PC-3 (cell line): ENCODE measurements at regions of chr11 and their contacts with region 1.

Region 1: DNA sequence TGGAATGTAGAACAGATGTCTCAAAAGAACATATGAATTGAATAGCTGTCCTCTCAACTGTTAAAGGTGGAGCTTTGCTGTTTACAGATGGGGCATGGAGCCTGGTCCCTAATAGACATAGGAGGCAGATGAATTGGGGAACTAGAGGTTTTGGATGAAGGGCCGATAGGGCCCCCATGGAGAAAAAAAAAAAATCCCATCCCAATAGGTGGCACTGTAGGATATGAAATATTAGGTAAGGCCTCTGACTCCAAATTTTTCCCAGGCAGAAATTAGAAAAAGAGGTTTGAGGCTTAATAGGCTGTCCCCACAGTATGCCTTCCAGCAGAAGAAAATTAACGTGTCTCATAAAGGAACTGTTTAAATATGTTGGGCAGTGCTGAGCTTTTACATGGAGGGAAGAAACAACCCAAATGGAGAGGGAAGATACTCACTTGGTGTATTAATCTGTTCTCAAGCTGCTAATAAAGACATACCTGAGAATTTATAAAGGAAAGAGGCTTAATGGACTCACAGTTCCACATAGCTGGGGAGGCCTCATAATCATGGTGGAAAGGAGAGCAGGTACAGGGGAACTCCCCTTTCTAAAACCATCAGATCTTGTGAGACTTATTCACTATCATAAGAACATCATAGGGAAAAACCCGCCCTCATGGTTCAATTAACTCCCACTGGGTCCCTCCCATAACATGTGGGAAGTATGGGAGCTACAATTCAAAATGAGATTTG is 30.1 kb upstream of the TMEM45B start:
- DNase-seq: peak; percentile 86
- ATAC-seq: peak; percentile 49
- H3K4me3 ChIP-seq: no peak overlapping the region
- H3K27ac ChIP-seq: peak overlapping the region; percentile 45
- H3K4me1 ChIP-seq: peaks cover 34% of the 10 kb centered on the region
- H3K27me3 ChIP-seq: no peaks in the 10 kb centered on the region
- CTCF ChIP-seq: peak; percentile 90

Region 2: GRCh38 chr11:129803533-129803932 is 18.0 kb after region 1 on chr11:
- CTCF ChIA-PET with region 1: interaction called, 3 read pairs
- POLR2A ChIA-PET with region 1: no interaction called
- intact Hi-C with region 1: loop called (anchors 1 kb)
- DNase-seq: peak; percentile 46
- ATAC-seq: peak; percentile 45
- H3K4me3 ChIP-seq: no peak overlapping the region
- H3K27ac ChIP-seq: peak overlapping the region; percentile 56
- H3K4me1 ChIP-seq: peaks cover 15% of the 10 kb centered on the region
- H3K27me3 ChIP-seq: no peaks in the 10 kb centered on the region
- CTCF ChIP-seq: no peak

Region 3: GRCh38 chr11:129861702-129862113 is 76.2 kb after region 1 on chr11:
- CTCF ChIA-PET with region 1: no interaction called
- POLR2A ChIA-PET with region 1: interaction called, 3 read pairs
- intact Hi-C with region 1: loop called (anchors 1 kb)
- DNase-seq: peak; percentile 100
- ATAC-seq: peak; percentile 95
- H3K4me3 ChIP-seq: peak overlapping the region; percentile 38; the same call in 1 of the 2 replicates
- H3K27ac ChIP-seq: peak overlapping the region; percentile 95
- H3K4me1 ChIP-seq: peaks cover 33% of the 10 kb centered on the region
- H3K27me3 ChIP-seq: no peaks in the 10 kb centered on the region
- CTCF ChIP-seq: no peak